Uterus (tissue), 4 donors: ENCODE measurements at regions of chr6 and their contacts with region 1.

Region 1: DNA sequence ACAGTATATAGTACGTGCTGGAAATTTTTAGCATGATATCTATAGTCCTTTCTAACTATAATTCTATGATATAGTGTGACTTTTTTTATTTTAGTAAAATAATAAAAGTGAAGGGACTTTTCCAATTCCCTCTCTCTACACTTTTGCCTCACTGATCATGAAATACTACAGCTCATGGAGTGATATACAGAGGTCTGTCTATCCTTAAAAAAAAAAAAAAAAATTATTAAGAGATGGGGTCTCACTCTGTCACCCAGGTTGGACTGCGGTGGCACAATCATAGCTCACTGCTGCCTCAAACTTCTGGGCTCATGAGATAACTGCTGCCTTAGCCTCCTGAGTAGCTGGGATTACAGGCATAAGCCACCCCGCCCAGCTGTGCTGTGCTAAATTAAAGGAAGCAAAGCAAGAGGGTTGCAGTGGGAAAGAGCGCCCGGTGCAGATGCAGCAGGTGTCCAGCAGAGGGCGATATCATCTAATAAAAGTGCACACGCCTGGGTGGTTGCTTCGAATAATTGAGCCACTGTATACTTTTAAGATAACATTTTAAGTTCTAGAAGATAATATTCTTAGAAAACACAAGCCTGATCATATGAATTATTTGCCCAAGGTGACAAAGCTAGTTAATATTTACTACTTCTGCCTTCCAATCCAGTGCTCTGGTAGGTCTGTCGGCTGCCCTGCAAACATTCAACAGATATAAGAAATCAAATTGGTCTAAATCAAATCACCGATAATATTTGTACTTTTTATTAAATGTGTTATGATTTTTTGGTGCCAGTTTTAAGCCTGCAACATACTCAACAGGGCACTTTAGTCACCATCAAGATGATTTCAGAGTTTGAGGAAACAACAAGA is 94.9 kb upstream of the NT5E start:
- DNase-seq: peak; percentile 73 to 80
- H3K4me3 ChIP-seq: no peak overlapping the region
- H3K27ac ChIP-seq: no peak overlapping the region
- H3K4me1 ChIP-seq: no peaks in the 10 kb centered on the region
- H3K27me3 ChIP-seq: no peaks in the 10 kb centered on the region
- CTCF ChIP-seq: peak; percentile 81 to 97 (median 88)
- POLR2A ChIP-seq: no peak

Region 2: DNA sequence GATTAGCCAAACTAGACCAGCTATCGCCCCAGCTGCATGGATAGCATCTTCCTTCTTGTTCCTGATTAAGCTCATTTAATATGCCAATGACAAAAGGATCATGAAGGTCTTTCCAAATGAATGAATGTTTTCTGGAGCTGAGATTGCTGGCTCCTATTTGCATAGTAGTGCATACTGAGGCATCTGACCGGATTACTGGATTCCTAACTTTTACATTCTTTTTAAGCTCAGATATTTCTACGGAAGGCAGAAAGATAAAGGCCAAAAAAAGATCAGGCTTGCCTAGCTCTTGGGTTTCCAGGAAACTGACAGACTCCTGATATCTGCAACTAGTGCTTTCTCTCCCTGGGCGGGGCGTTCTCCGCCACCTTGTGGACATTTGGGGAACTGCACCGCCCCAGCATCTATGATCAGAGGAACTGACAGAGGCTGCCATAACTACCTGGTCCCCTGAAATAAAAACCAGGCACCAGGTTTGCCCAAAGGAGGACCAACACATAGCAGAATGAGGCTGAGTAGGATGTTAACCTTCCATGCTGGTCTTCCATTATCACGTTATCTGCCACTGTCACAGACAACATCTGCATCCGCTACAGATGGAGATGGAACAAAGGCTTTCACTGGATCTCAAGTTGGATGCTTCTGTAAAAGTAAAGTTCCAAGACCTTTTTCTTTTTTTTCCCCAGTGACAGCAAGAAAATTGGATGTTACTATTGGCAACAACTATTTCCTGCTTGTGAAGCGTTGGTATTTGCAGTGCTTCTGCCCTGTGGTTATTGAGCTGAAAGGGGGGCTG is 128.1 kb after region 1 on chr6:
- intact Hi-C with region 1: loop called (anchors 5 kb)
- DNase-seq: peak; percentile 80 to 88
- H3K4me3 ChIP-seq: no peak overlapping the region
- H3K27ac ChIP-seq: peak overlapping the region; percentile 56 to 63
- H3K4me1 ChIP-seq: peaks cover 0 to 7% of the 10 kb centered on the region in 2 donors
- H3K27me3 ChIP-seq: no peaks in the 10 kb centered on the region
- CTCF ChIP-seq: peak; percentile 93 to 100 (median 96)
- POLR2A ChIP-seq: no peak